OCI-LY7 (cell line): ENCODE measurements at regions of chr6 and their contacts with region 1.

Region 1: GRCh38 chr6:63598049-63599036 is 26.1 kb downstream of the LOC128125822 start:
- DNase-seq: peak; percentile 88
- H3K4me3 ChIP-seq: peak overlapping the region; percentile 64
- H3K27ac ChIP-seq: peak overlapping the region; percentile 41
- H3K4me1 ChIP-seq: peaks cover 16% of the 10 kb centered on the region
- CTCF ChIP-seq: peak; percentile 95

Region 2: DNA sequence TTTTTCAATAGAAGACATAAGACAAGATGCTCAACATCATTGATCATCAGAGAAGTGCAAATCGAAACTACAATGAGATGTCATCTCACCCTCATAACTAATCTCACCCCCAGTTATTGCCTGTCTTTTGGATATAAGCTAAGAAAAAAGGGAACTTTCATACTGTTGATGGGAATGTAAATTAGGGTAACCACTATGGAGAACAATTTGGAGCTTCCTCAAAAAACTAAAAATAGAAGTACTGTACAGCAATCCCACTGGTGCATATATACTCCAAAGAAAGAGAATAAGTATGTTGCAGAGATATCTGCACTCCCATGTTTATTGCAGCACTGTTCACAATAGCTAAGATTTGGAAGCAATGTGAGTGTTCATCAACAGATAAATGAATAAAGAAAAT is 10.9 kb after region 1 on chr6:
- CTCF ChIA-PET with region 1: interaction called, 3 read pairs
- POLR2A ChIA-PET with region 1: interaction called, 14 read pairs
- intact Hi-C with region 1: no loop called
- DNase-seq: no peak
- H3K4me3 ChIP-seq: no peak overlapping the region
- H3K27ac ChIP-seq: no peak overlapping the region
- H3K4me1 ChIP-seq: no peaks in the 10 kb centered on the region
- CTCF ChIP-seq: no peak